ENCODE measurements at regions of chr11 and their contacts with region 1.

Region 1: GRCh38 chr11:118572061-118572980 is at the start of gene ARCN1:
- DNase-seq: peak; percentile 84
- H3K4me3 Mint-ChIP-seq: peak within 1 kb of the TSS; percentile 91
- H3K27ac Mint-ChIP-seq: peak within 1 kb of the TSS; percentile 94
- H3K4me1 Mint-ChIP-seq: peaks cover 54% of the 10 kb centered on the region
- H3K27me3 Mint-ChIP-seq: no peaks in the 10 kb centered on the region
- total RNA-seq, gene ARCN1: 159 to 174 TPM

Region 2: GRCh38 chr11:118304568-118305248 is 267.6 kb before region 1 on chr11 and contains the start of gene CD3E:
- CTCF ChIA-PET with region 1: no interaction called
- intact Hi-C with region 1: loop called (anchors 1 kb)
- DNase-seq: peak; percentile 88
- H3K4me3 Mint-ChIP-seq: peak within 1 kb of the TSS; percentile 98
- H3K27ac Mint-ChIP-seq: peak within 1 kb of the TSS; percentile 100
- H3K4me1 Mint-ChIP-seq: peaks cover 68% of the 10 kb centered on the region
- H3K27me3 Mint-ChIP-seq: no peaks in the 10 kb centered on the region
- total RNA-seq, gene CD3E: 377 to 415 TPM

Region 3: DNA sequence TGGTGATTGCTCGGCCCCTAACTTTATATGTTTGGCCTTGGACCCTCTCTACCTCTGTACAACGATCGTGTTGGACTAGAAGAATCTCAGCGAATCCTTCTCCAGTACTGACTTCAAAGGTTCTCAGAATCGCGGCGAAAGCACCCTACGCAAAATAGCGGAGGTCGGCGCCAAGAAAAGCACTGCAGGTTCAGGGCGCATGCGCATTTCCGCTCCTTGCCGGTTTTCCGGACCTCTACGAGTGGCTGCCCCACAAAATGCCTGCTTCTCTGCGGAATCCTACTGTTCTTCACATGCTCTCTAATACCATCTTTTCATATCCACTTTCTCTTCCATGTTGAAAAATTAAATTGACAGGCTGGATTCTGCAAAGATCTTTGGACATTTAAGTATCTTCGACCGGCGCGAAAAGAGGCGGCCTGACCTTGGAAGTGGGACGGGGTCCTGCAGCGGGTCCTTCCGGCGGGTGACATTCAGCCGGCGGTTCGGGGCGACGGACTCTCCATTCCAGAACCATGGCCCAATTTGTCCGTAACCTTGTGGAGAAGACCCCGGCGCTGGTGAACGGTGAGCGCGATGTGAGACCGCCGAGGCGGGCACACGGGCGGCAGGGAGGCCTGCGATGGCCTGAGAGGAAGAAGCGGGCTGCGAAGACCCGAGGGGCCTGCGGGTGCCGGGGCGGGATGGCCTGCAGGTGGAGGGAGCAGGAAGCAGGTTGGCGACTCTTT is 171.0 kb before region 1 on chr11 and contains the start of gene ATP5MG:
- CTCF ChIA-PET with region 1: no interaction called
- intact Hi-C with region 1: loop called (anchors 2 kb)
- DNase-seq: peak; percentile 97
- H3K4me3 Mint-ChIP-seq: peak within 1 kb of the TSS; percentile 95
- H3K27ac Mint-ChIP-seq: peak within 1 kb of the TSS; percentile 98
- H3K4me1 Mint-ChIP-seq: peaks cover 58% of the 10 kb centered on the region
- H3K27me3 Mint-ChIP-seq: no peaks in the 10 kb centered on the region
- total RNA-seq, gene ATP5MG: 279 to 284 TPM

Region 4: GRCh38 chr11:118610804-118611795 is 38.8 kb after region 1 on chr11:
- CTCF ChIA-PET with region 1: interaction called, 5 read pairs
- intact Hi-C with region 1: loop called (anchors 1 kb)
- DNase-seq: peak; percentile 90
- H3K4me3 Mint-ChIP-seq: peak overlapping the region; percentile 51
- H3K27ac Mint-ChIP-seq: no peak overlapping the region
- H3K4me1 Mint-ChIP-seq: peaks cover 20% of the 10 kb centered on the region
- H3K27me3 Mint-ChIP-seq: peaks cover 17% of the 10 kb centered on the region

Region 5: GRCh38 chr11:118689851-118690552 is 117.7 kb after region 1 on chr11:
- CTCF ChIA-PET with region 1: no interaction called
- intact Hi-C with region 1: no loop called
- DNase-seq: peak; percentile 96
- H3K4me3 Mint-ChIP-seq: peak overlapping the region; percentile 77
- H3K27ac Mint-ChIP-seq: peak overlapping the region; percentile 82
- H3K4me1 Mint-ChIP-seq: peaks cover 46% of the 10 kb centered on the region
- H3K27me3 Mint-ChIP-seq: no peaks in the 10 kb centered on the region

Region 6: GRCh38 chr11:119030329-119031049 is 458.2 kb after region 1 on chr11 and contains the start of gene SLC37A4:
- CTCF ChIA-PET with region 1: no interaction called
- intact Hi-C with region 1: loop called (anchors 1 kb)
- DNase-seq: peak; percentile 99
- H3K4me3 Mint-ChIP-seq: peak within 1 kb of the TSS; percentile 77
- H3K27ac Mint-ChIP-seq: peak within 1 kb of the TSS; percentile 85
- H3K4me1 Mint-ChIP-seq: peaks cover 23% of the 10 kb centered on the region
- H3K27me3 Mint-ChIP-seq: no peaks in the 10 kb centered on the region
- total RNA-seq, gene SLC37A4: 28.3 to 30.3 TPM

Measured in activated naive CD4-positive, alpha-beta T cell treated with anti-CD3 and anti-CD28 coated beads for 36 hours (primary cell).